ENCODE measurements at regions of chr14 and their contacts with region 1.

Region 1: GRCh38 chr14:61475316-61475715 is 153.9 kb downstream of the PRKCH start:
- DNase-seq: no peak
- H3K4me3 ChIP-seq: no peak overlapping the region
- H3K27ac ChIP-seq: peak overlapping the region in 1 of 2 experiments; percentile 97; a peak in 2 of 4 replicates
- H3K4me1 ChIP-seq: peaks cover 14 to 66% of the 10 kb centered on the region in 2 experiments
- H3K27me3 ChIP-seq: no peaks in the 10 kb centered on the region
- CTCF ChIP-seq: peak; percentile 84
- EP300 ChIP-seq: peak in 1 of 2 experiments; percentile 25; a peak in 1 of 4 replicates
- RAD21 ChIP-seq: peak; percentile 68

Region 2: DNA sequence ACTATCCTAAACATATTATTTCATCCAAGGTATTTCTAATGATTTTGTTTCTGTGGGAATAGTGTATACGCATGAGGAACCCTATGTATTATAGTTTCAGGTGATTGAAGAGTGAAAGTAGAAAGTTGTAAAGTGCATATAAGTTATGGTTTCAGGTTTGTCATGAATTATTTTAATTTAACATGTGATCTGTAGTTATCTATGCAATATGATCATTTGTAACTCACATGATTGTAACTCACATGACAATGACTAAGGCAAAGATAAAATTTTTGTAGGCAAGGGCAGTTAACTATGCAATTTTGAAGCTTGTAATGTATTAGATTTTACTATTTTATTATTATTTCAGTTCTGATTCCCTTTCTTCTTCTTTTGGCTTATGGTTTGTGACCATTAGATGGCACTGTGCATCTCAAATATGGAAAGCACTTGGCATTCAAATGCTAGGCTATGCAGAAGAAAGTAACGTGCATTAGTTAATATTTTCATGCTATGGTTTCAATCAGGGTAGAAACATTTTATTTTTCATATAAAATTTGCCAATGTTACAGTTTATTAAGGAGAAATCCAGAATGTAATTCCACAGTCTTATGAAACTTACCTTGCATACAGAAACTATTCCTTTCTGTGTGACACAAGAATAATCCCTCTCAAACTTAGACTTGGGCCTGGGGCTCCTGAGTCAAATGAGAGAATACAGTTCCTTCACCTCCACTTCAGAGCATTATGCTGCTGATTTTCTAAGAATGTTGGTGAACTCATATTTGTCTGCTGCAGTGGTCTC is 178.4 kb before region 1 on chr14:
- CTCF ChIA-PET with region 1: no interaction called
- POLR2A ChIA-PET with region 1: no interaction called
- DNase-seq: peak; percentile 34
- H3K4me3 ChIP-seq: peak overlapping the region in 1 of 2 experiments; percentile 14; a peak in 1 of 4 replicates
- H3K27ac ChIP-seq: no peak overlapping the region
- H3K4me1 ChIP-seq: no peaks in the 10 kb centered on the region
- H3K27me3 ChIP-seq: no peaks in the 10 kb centered on the region
- CTCF ChIP-seq: peak; percentile 86
- EP300 ChIP-seq: no peak
- RAD21 ChIP-seq: peak; percentile 76

Region 3: GRCh38 chr14:61461808-61462275 is 13.5 kb before region 1 on chr14:
- CTCF ChIA-PET with region 1: interaction called, 25 read pairs
- POLR2A ChIA-PET with region 1: interaction called, 5 read pairs
- DNase-seq: peak; percentile 44
- H3K4me3 ChIP-seq: no peak overlapping the region; a peak in 1 of 4 replicates
- H3K27ac ChIP-seq: peak overlapping the region; percentile 51 to 97; a peak in 3 of 4 replicates
- H3K4me1 ChIP-seq: peaks cover 9 to 27% of the 10 kb centered on the region in 2 experiments
- H3K27me3 ChIP-seq: no peaks in the 10 kb centered on the region
- CTCF ChIP-seq: peak; percentile 78
- EP300 ChIP-seq: no peak
- RAD21 ChIP-seq: peak; percentile 97

Region 4: GRCh38 chr14:61609191-61609843 is 134.0 kb after region 1 on chr14:
- CTCF ChIA-PET with region 1: interaction called, 18 read pairs
- POLR2A ChIA-PET with region 1: interaction called, 16 read pairs
- DNase-seq: peak; percentile 50
- H3K4me3 ChIP-seq: no peak overlapping the region; a peak in 1 of 4 replicates
- H3K27ac ChIP-seq: peak overlapping the region; percentile 89 to 99
- H3K4me1 ChIP-seq: peaks cover 16 to 47% of the 10 kb centered on the region in 2 experiments
- H3K27me3 ChIP-seq: no peaks in the 10 kb centered on the region
- CTCF ChIP-seq: no peak
- EP300 ChIP-seq: peak in 1 of 2 experiments; percentile 79; a peak in 2 of 4 replicates
- RAD21 ChIP-seq: peak; percentile 27; the same call in 1 of the 2 replicates

Region 5: DNA sequence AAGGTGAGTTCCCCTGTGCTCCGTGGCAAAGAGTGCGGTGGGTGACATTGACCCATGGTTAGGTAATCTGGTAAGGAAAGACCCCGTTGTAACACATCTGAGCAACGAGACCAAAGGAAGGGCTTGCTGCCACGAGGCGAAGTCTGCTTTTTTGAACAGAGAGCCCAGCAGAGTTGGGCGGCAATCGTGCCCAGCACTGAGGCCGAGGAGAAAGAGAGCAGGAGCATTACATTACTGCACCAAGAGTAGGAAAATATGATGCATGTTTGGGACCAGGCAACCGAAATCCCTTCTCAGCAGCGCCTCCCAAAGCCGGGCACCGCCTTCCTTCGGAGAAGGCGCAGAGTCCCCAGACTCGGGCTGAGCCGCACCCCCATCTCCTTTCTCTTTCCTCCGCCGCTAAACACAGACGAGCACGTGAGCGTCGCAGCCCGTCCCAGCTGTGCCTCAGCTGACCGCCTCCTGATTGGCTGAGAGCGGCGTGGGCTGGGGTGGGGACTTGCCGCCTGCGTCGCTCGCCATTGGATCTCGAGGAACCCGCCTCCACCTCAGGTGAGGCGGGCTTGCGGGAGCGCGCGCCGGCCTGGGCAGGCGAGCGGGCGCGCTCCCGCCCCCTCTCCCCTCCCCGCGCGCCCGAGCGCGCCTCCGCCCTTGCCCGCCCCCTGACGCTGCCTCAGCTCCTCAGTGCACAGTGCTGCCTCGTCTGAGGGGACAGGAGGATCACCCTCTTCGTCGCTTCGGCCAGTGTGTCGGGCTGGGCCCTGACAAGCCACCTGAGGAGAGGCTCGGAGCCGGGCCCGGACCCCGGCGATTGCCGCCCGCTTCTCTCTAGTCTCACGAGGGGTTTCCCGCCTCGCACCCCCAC is 219.7 kb after region 1 on chr14 and contains the start of gene HIF1A:
- CTCF ChIA-PET with region 1: interaction called, 17 read pairs
- POLR2A ChIA-PET with region 1: interaction called, 30 read pairs
- DNase-seq: peak; percentile 97
- H3K4me3 ChIP-seq: peak within 1 kb of the TSS; percentile 78 to 92
- H3K27ac ChIP-seq: peak within 1 kb of the TSS; percentile 92 to 98
- H3K4me1 ChIP-seq: peaks cover 6 to 8% of the 10 kb centered on the region in 2 experiments; a peak in 3 of 4 replicates
- H3K27me3 ChIP-seq: no peaks in the 10 kb centered on the region
- CTCF ChIP-seq: no peak
- EP300 ChIP-seq: peak; percentile 16 to 28; a peak in 2 of 4 replicates
- RAD21 ChIP-seq: no peak; the same call in 1 of the 2 replicates
- polyA plus RNA-seq, gene HIF1A: 18.9 and 20.8 TPM in 2 replicates

Region 6: DNA sequence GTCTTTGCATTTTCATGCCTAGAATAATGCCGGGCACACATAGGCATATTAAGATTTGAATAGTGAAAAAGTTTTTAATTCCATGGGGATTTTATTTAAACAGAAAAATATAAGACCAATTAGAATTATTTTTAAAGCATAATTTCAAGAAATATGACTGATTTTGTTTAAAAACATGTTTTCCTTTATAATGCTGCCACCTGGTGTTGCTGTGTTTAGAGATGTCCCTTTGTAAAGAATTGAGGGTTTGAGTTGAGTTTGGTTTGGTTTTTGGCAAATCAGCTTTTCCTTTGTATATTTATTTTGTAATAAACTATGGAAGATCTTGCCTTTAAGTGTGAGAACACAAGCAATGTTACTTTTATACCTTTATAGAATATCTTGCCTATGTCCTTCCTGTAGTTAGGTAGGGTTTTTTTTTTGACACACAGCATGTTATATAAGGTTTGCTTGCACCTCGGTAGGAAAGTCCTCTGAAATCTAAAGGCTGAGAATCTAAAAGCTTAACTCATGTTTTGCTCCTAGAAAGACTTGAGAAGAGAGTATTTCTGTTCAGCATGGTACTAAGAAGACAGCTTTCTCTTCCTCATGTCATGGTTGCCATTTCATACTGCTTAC is 255.5 kb after region 1 on chr14:
- CTCF ChIA-PET with region 1: interaction called, 24 read pairs
- POLR2A ChIA-PET with region 1: no interaction called
- DNase-seq: no peak
- H3K4me3 ChIP-seq: no peak overlapping the region
- H3K27ac ChIP-seq: peak overlapping the region; percentile 16 to 66
- H3K4me1 ChIP-seq: peaks cover 0 to 4% of the 10 kb centered on the region in 2 experiments; a peak in 1 of 4 replicates
- H3K27me3 ChIP-seq: no peaks in the 10 kb centered on the region
- CTCF ChIP-seq: peak; percentile 76
- EP300 ChIP-seq: no peak
- RAD21 ChIP-seq: peak; percentile 76

Region 7: GRCh38 chr14:61761959-61762786 is 286.9 kb after region 1 on chr14 and contains the start of gene SNAPC1:
- CTCF ChIA-PET with region 1: interaction called, 3 read pairs
- POLR2A ChIA-PET with region 1: interaction called, 16 read pairs
- DNase-seq: peak; percentile 97
- H3K4me3 ChIP-seq: peak within 1 kb of the TSS; percentile 81 to 84
- H3K27ac ChIP-seq: peak within 1 kb of the TSS; percentile 81 to 92
- H3K4me1 ChIP-seq: peaks cover 12 to 15% of the 10 kb centered on the region in 2 experiments; a peak in 3 of 4 replicates
- H3K27me3 ChIP-seq: no peaks in the 10 kb centered on the region
- CTCF ChIP-seq: no peak
- EP300 ChIP-seq: no peak
- RAD21 ChIP-seq: no peak
- polyA plus RNA-seq, gene SNAPC1: 3.4 and 4.6 TPM in 2 replicates

Measured in SK-N-SH (cell line).